ENCODE measurements at regions of chr7 and their contacts with region 1.

Region 1: GRCh38 chr7:87876040-87876868 is at the starts of genes DBF4 and SLC25A40:
- DNase-seq: peak; percentile 96
- H3K4me3 ChIP-seq: peak within 1 kb of the TSS; percentile 77 to 89 (median 87)
- H3K27ac ChIP-seq: peak within 1 kb of the TSS; percentile 89 to 96 (median 94)
- H3K4me1 ChIP-seq: peaks cover 3 to 31% (median 22%) of the 10 kb centered on the region in 4 donors
- H3K27me3 ChIP-seq: no peaks in the 10 kb centered on the region
- CTCF ChIP-seq: no peak
- EP300 ChIP-seq: no peak
- POLR2A ChIP-seq: peak in 1 of 2 donors; percentile 9
- total RNA-seq, gene DBF4: 2.3 to 6.4 (median 3.0) TPM
- total RNA-seq, gene SLC25A40: 17.4 to 46.8 (median 21.9) TPM

Region 2: GRCh38 chr7:87933945-87934698 is 57.9 kb after region 1 on chr7 and contains the start of gene ADAM22:
- intact Hi-C with region 1: loop called (anchors 5 kb)
- DNase-seq: peak; percentile 89
- H3K4me3 ChIP-seq: peak within 1 kb of the TSS; percentile 48 to 76 (median 64)
- H3K27ac ChIP-seq: peak within 1 kb of the TSS in 3 of 4 donors; percentile 29 to 65 (median 31)
- H3K4me1 ChIP-seq: peaks cover 0 to 16% (median 11%) of the 10 kb centered on the region in 4 donors
- H3K27me3 ChIP-seq: peaks cover 0 to 8% (median 0%) of the 10 kb centered on the region in 3 donors
- CTCF ChIP-seq: no peak
- EP300 ChIP-seq: no peak
- POLR2A ChIP-seq: no peak
- total RNA-seq, gene ADAM22: 1.4 to 3.5 (median 1.9) TPM

Region 3: DNA sequence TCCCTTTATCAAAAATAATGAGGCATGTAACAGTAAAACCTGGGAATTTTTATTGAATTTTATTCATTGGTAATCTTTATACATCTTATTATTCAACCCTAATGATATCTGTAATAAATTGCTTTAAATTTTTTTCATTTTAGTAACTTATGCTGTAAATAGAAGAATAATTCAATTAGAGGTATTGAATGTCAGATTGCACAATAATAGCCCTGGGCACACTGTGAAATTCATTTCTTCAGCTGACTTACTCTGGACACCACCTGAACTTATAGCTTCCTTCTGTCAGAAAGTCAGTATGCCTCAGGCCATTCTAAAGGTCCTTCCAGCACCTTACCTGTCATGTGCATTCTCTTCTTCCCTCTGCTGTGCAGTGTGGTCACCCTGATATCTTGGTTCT is 117.0 kb after region 1 on chr7:
- intact Hi-C with region 1: no loop called
- DNase-seq: no peak
- H3K4me3 ChIP-seq: no peak overlapping the region
- H3K27ac ChIP-seq: no peak overlapping the region
- H3K4me1 ChIP-seq: no peaks in the 10 kb centered on the region
- H3K27me3 ChIP-seq: no peaks in the 10 kb centered on the region
- CTCF ChIP-seq: no peak
- EP300 ChIP-seq: no peak
- POLR2A ChIP-seq: no peak